ENCODE measurements at regions of chr12 and their contacts with region 1.

Region 1: GRCh38 chr12:75437564-75437963 is 43.0 kb upstream of the GLIPR1 start:
- DNase-seq: no peak
- ATAC-seq: peak; percentile 93
- H3K4me3 ChIP-seq: no peak overlapping the region
- H3K27ac ChIP-seq: no peak overlapping the region
- H3K4me1 ChIP-seq: no peaks in the 10 kb centered on the region
- H3K27me3 ChIP-seq: no peaks in the 10 kb centered on the region
- CTCF ChIP-seq: peak; percentile 35 to 42 (median 41); a peak in 3 of 6 replicates
- EP300 ChIP-seq: no peak
- POLR2A ChIP-seq: no peak
- RAD21 ChIP-seq: peak; percentile 48

Region 2: GRCh38 chr12:75489613-75490210 is 52.1 kb after region 1 on chr12:
- CTCF ChIA-PET with region 1: interaction called, 25 read pairs
- POLR2A ChIA-PET with region 1: no interaction called
- RAD21 ChIA-PET with region 1: interaction called, 7 read pairs
- SMC1A ChIA-PET with region 1: interaction called, 21 read pairs
- in situ Hi-C with region 1: no loop called
- intact Hi-C with region 1: loop called (anchors 1 kb)
- DNase-seq: no peak
- ATAC-seq: peak; percentile 76
- H3K4me3 ChIP-seq: no peak overlapping the region; the same call in 1 of the 2 replicates
- H3K27ac ChIP-seq: no peak overlapping the region
- H3K4me1 ChIP-seq: no peaks in the 10 kb centered on the region
- H3K27me3 ChIP-seq: no peaks in the 10 kb centered on the region
- CTCF ChIP-seq: no peak
- EP300 ChIP-seq: no peak
- POLR2A ChIP-seq: no peak
- RAD21 ChIP-seq: no peak